ENCODE measurements at regions of chr12 and their contacts with region 1.

Region 1: GRCh38 chr12:101939856-101940265 is 62.5 kb downstream of the DRAM1 start:
- DNase-seq: peak in 1 of 2 donors; percentile 50
- ATAC-seq: peak in 5 of 8 donors; percentile 31 to 52 (median 46)
- H3K4me3 ChIP-seq: no peak overlapping the region
- H3K27ac ChIP-seq: peak overlapping the region in 6 of 10 donors; percentile 32 to 83 (median 62)
- H3K4me1 ChIP-seq: peaks cover 0 to 39% (median 3%) of the 10 kb centered on the region in 9 donors
- H3K27me3 ChIP-seq: no peaks in the 10 kb centered on the region
- CTCF ChIP-seq: peak in 8 of 9 donors; percentile 58 to 80 (median 70)

Region 2: GRCh38 chr12:102769319-102769916 is 829.6 kb after region 1 on chr12:
- intact Hi-C with region 1: loop called in 2 of 10 experiments (anchors 5 to 10 kb)
- DNase-seq: peak; percentile 23 to 33
- ATAC-seq: peak in 7 of 8 donors; percentile 67 to 86 (median 81)
- H3K4me3 ChIP-seq: no peak overlapping the region
- H3K27ac ChIP-seq: peak overlapping the region in 2 of 10 donors; percentile 17 to 28
- H3K4me1 ChIP-seq: no peaks in the 10 kb centered on the region
- H3K27me3 ChIP-seq: peaks cover 0 to 12% (median 0%) of the 10 kb centered on the region in 7 donors
- CTCF ChIP-seq: peak; percentile 22 to 69 (median 58)

Region 3: DNA sequence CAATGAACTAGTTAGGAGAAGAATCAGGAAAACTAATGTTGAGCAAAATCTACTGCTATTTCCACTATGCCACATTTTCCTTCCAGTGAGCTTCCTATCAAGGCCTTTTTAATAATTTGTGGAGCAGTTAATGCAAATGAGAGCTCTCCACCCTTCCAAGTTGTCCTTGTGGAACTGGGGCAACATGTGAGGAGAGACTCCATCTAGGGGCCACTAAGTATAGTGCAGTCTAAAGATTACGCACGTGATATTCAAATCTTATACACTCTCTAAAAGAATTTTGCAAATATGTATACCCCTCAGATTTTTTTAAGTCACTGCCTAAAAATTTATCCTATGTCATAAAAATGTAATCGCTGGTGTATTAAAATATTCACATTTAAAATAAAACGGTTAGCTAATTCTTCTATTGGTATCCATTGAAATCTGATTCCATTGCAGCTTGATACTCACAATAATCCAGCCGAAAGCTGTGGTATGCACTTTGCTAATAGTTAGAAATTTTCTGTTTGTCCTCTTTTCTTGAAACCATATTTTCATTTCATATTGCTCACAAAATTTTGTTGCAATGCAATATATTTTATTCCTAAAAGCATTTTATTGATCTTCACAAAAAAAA is 877.1 kb after region 1 on chr12:
- intact Hi-C with region 1: loop called in 1 of 10 experiments (anchors 10 kb)
- DNase-seq: no peak
- ATAC-seq: no peak
- H3K4me3 ChIP-seq: no peak overlapping the region
- H3K27ac ChIP-seq: no peak overlapping the region
- H3K4me1 ChIP-seq: no peaks in the 10 kb centered on the region
- H3K27me3 ChIP-seq: peaks cover 0 to 28% (median 6%) of the 10 kb centered on the region in 7 donors
- CTCF ChIP-seq: peak in 8 of 9 donors; percentile 8 to 63 (median 50)

Measured in heart right ventricle (tissue), 16 donors.